Adrenal gland (tissue), 19 donors: ENCODE measurements at regions of chr9 and their contacts with region 1.

Region 1: GRCh38 chr9:18459958-18460584 is 13.9 kb upstream of the ADAMTSL1 start:
- DNase-seq: no peak
- H3K4me3 ChIP-seq: no peak overlapping the region
- H3K27ac ChIP-seq: no peak overlapping the region
- H3K4me1 ChIP-seq: no peaks in the 10 kb centered on the region
- H3K27me3 ChIP-seq: no peaks in the 10 kb centered on the region
- CTCF ChIP-seq: no peak
- POLR2A ChIP-seq: no peak

Region 2: DNA sequence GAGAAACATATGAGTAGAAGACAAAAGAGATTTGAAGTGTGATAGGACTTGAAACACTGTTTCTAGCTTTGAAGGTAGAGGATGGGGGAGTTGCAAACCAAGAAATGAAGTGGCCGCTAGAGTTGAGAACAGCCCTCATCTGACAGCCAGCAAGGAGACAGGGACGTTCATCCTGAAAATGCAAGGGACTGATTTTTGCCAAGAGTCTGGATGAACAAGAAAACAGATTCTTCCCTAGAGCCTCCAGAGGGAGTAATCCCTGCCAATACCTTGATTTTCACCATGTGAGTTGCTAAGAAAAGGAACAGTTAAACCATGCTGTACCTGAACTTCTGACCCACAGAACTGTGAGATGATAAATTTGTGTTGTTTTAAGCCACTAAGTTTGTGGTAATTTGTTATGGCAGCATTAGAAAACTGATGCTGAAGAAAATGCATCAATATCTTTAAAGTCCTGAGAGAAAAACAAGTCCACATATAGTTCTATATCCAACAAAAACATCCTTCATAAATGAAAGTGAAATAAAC is 140.1 kb before region 1 on chr9:
- intact Hi-C with region 1: no loop called
- DNase-seq: no peak
- H3K4me3 ChIP-seq: no peak overlapping the region
- H3K27ac ChIP-seq: no peak overlapping the region
- H3K4me1 ChIP-seq: no peaks in the 10 kb centered on the region
- H3K27me3 ChIP-seq: no peaks in the 10 kb centered on the region
- CTCF ChIP-seq: no peak
- POLR2A ChIP-seq: no peak

Region 3: GRCh38 chr9:18347386-18348082 is 112.5 kb before region 1 on chr9:
- intact Hi-C with region 1: no loop called
- DNase-seq: peak; percentile 21 to 70 (median 50)
- H3K4me3 ChIP-seq: no peak overlapping the region
- H3K27ac ChIP-seq: no peak overlapping the region
- H3K4me1 ChIP-seq: peaks cover 0 to 4% of the 10 kb centered on the region in 2 donors
- H3K27me3 ChIP-seq: no peaks in the 10 kb centered on the region
- CTCF ChIP-seq: no peak
- POLR2A ChIP-seq: no peak

Region 4: GRCh38 chr9:18405240-18405639 is 54.8 kb before region 1 on chr9:
- intact Hi-C with region 1: loop called in 1 of 2 experiments (anchors 10 kb)
- DNase-seq: peak in 1 of 7 donors; percentile 12
- H3K4me3 ChIP-seq: no peak overlapping the region
- H3K27ac ChIP-seq: no peak overlapping the region
- H3K4me1 ChIP-seq: no peaks in the 10 kb centered on the region
- H3K27me3 ChIP-seq: no peaks in the 10 kb centered on the region
- CTCF ChIP-seq: no peak
- POLR2A ChIP-seq: no peak

Region 5: DNA sequence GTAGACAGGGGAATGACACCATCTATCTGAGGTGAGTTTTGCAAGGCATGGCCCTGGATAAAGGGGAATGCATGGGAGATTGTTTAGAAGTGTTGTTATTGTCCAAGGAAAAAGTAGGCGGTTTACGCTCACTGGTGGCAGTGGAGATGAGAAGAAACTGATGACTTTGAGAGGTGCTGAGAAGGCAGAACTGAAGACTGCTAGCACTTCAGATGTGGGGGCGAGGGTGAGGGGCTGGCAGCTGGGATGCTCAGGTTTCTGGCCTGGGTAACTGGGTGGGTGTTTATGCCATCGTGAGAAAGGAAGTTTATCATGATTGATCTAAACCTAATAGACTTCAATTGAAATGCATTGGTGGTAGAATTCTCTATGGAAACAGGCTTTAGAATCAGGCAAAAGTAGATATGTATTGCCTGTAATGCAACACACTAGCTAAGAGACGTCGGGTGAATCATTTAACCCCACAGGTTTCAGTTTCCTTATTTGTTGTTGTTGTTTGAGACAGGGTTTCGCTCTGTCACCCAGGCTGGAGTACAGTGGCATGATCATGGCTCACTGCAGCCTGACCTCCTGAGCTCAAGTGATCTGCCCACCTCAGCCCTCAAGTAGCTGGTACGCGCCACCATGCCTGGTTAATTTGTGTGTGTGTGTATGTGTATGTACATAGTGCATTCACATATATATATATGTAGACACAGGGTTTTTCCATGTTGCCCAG is 1205.2 kb after region 1 on chr9:
- intact Hi-C with region 1: no loop called
- DNase-seq: no peak
- H3K4me3 ChIP-seq: no peak overlapping the region
- H3K27ac ChIP-seq: peak overlapping the region in 1 of 5 donors; percentile 30
- H3K4me1 ChIP-seq: no peaks in the 10 kb centered on the region
- H3K27me3 ChIP-seq: no peaks in the 10 kb centered on the region
- CTCF ChIP-seq: no peak
- POLR2A ChIP-seq: no peak